ENCODE measurements at regions of chr4 and their contacts with region 1.

Region 1: GRCh38 chr4:6783053-6783981 is 790 bp downstream of the KIAA0232 start:
- DNase-seq: peak; percentile 83 to 95 (median 91)
- H3K4me3 ChIP-seq: peak overlapping the region; percentile 66 to 100 (median 97)
- H3K27ac ChIP-seq: peak overlapping the region; percentile 84 to 100 (median 99)
- H3K27me3 ChIP-seq: no peaks in the 10 kb centered on the region
- CTCF ChIP-seq: peak in 45 of 56 donors; percentile 6 to 65 (median 36)

Region 2: GRCh38 chr4:6727081-6727942 is 56.0 kb before region 1 on chr4:
- intact Hi-C with region 1: loop called in 1 of 2 experiments (anchors 1 kb)
- DNase-seq: peak; percentile 53 to 93 (median 90)
- H3K4me3 ChIP-seq: peak overlapping the region in 51 of 59 donors; percentile 2 to 55 (median 30)
- H3K27ac ChIP-seq: peak overlapping the region; percentile 49 to 97 (median 92)
- H3K27me3 ChIP-seq: no peaks in the 10 kb centered on the region
- CTCF ChIP-seq: peak in 20 of 56 donors; percentile 6 to 41 (median 16)

Region 3: GRCh38 chr4:6873792-6874461 is 90.6 kb after region 1 on chr4:
- intact Hi-C with region 1: loop called (anchors 2 to 5 kb)
- DNase-seq: peak; percentile 61 to 89 (median 77)
- H3K4me3 ChIP-seq: no peak overlapping the region
- H3K27ac ChIP-seq: peak overlapping the region in 55 of 59 donors; percentile 5 to 85 (median 66)
- H3K27me3 ChIP-seq: no peaks in the 10 kb centered on the region
- CTCF ChIP-seq: peak; percentile 65 to 94 (median 86)

Region 4: DNA sequence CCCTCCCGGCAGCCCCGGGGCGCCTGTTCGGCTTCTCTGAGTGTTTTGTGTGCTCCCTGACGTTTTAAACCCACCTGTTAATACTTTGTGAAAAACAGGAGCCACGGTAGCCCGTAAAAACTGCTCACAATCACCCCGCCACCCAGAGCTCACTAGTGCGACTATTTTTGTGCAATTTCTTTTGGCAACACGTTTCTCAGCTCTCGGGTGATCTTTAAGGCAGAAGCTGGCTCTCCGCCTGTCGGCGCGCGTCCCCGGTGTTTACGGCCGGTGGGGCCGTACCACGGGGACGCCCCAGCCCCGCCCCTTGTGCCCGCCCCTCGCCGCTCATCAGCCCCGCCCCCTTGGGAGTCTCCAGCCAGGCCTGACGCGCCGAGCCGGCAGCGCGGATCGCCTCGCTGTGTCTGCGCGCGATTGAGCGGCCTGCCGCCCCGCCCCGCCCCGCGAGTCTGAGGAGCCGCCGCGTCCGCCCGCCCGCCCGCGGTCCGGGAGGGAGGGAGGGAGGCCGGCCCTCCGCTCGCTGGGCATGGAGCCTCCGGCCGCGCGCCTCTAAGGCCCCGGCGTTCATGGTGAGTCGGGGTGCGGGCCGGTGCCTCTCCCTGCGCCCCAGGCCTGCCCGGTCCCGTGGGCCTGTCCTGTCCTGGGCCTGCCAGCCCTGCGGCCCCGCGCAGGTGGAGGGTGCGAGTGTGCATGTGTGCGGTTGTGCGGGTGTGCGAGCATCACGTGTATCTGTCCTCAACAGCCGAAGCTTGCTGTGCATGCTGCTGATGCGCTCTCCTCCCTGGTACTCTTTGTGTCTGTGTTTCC is 203.7 kb after region 1 on chr4:
- intact Hi-C with region 1: loop called (anchors 5 to 10 kb)
- DNase-seq: peak; percentile 91 to 98 (median 95)
- H3K4me3 ChIP-seq: peak overlapping the region; percentile 59 to 98 (median 91)
- H3K27ac ChIP-seq: peak overlapping the region; percentile 59 to 99 (median 96)
- H3K27me3 ChIP-seq: no peaks in the 10 kb centered on the region
- CTCF ChIP-seq: peak in 26 of 56 donors; percentile 7 to 56 (median 32)

Region 5: GRCh38 chr4:7017446-7018330 is 234.4 kb after region 1 on chr4:
- intact Hi-C with region 1: no loop called
- DNase-seq: peak in 2 of 10 donors; percentile 46 to 57
- H3K4me3 ChIP-seq: no peak overlapping the region
- H3K27ac ChIP-seq: peak overlapping the region in 44 of 59 donors; percentile 0 to 84 (median 66)
- H3K27me3 ChIP-seq: no peaks in the 10 kb centered on the region
- CTCF ChIP-seq: peak in 1 of 56 donors; percentile 13

Measured in dorsolateral prefrontal cortex (tissue), 120 donors.